MCF 10A (cell line): ENCODE measurements at regions of chr20 and their contacts with region 1.

Region 1: GRCh38 chr20:56392282-56393137 is at the start of gene CSTF1:
- DNase-seq: peak; percentile 99
- H3K4me3 Mint-ChIP-seq: no peak within 1 kb of the TSS
- H3K27ac Mint-ChIP-seq: no peak within 1 kb of the TSS
- H3K4me1 Mint-ChIP-seq: peaks cover 24% of the 10 kb centered on the region
- H3K27me3 Mint-ChIP-seq: no peaks in the 10 kb centered on the region
- CTCF ChIP-seq: no peak
- total RNA-seq, gene CSTF1: 30.1 and 35.1 TPM in 2 replicates

Region 2: DNA sequence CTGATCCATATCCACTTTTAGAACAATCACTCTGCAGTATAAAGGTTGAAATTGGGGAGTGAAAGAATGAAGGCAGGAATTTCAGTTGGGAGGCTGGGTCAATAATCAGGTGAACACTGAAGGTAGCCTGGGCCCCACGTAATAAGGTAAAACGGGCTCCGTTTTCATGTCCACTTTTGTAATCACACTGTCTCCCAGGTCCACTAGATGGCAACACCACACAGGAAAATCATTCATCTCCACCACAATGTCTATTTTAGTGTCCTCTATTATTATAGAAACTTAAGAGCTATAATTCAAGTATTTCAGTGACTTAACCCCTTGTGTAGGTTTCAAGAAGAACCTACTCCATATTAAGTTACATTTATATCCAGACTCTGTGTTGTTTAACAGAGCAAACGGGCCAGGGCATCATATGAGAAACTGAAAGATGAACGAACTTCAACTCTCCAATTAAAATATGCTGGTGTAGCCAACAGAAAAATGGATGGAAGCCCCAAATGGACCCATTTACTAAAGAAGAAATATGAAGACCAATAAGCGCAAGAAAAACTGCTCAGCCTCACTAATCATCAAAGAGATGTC is 189.9 kb before region 1 on chr20:
- CTCF ChIA-PET with region 1: interaction called, 6 read pairs
- POLR2A ChIA-PET with region 1: no interaction called
- intact Hi-C with region 1: loop called (anchors 2 kb)
- DNase-seq: peak; percentile 63
- H3K4me3 Mint-ChIP-seq: no peak overlapping the region
- H3K27ac Mint-ChIP-seq: no peak overlapping the region
- H3K4me1 Mint-ChIP-seq: no peaks in the 10 kb centered on the region
- H3K27me3 Mint-ChIP-seq: no peaks in the 10 kb centered on the region
- CTCF ChIP-seq: peak; percentile 73

Region 3: DNA sequence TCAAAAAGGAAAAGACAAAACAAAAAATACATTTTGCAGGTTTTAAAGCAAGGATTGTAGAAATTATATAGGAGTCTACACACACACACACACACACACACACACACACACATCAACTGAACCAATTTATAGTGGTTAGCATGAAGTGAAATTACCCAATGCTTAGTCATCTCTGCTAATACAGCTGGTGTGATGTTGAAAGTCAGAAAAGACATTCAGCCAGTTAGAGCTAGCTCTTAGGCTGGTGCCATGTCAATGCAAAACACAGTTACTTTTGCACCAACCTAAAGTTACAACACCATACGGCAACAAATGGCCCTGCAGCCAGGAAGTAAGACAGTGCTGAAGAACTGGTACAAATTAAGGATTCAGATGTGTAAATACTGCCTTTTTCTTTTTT is 18.6 kb before region 1 on chr20:
- CTCF ChIA-PET with region 1: interaction called, 30 read pairs
- POLR2A ChIA-PET with region 1: interaction called, 28 read pairs
- intact Hi-C with region 1: no loop called
- DNase-seq: peak; percentile 93
- H3K4me3 Mint-ChIP-seq: peak overlapping the region; percentile 46
- H3K27ac Mint-ChIP-seq: peak overlapping the region; percentile 78
- H3K4me1 Mint-ChIP-seq: peaks cover 14% of the 10 kb centered on the region
- H3K27me3 Mint-ChIP-seq: no peaks in the 10 kb centered on the region
- CTCF ChIP-seq: no peak

Region 4: DNA sequence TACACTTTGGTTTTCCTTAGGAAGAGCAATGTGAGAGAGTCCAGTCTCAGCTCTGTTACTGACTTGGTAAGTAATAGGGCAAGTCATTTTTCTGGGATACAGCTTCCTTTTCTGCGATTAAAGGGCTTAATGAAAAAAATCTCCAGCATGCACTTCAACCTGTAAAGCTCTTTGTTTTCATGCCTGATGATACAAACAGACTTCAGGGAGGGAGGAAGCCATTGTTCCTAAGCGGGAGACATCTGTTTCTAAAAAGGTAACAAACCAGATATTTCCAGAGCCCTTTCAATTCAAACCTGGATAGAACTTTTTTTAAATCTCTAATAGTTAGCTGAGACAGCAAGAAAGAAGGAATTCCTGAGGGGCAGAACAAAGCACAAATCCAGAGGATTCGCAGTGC is 14.4 kb after region 1 on chr20:
- CTCF ChIA-PET with region 1: interaction called, 12 read pairs
- POLR2A ChIA-PET with region 1: interaction called, 10 read pairs
- intact Hi-C with region 1: no loop called
- DNase-seq: no peak
- H3K4me3 Mint-ChIP-seq: no peak overlapping the region
- H3K27ac Mint-ChIP-seq: no peak overlapping the region
- H3K4me1 Mint-ChIP-seq: no peaks in the 10 kb centered on the region
- H3K27me3 Mint-ChIP-seq: no peaks in the 10 kb centered on the region
- CTCF ChIP-seq: no peak

Region 5: GRCh38 chr20:56468316-56469082 is 76.0 kb after region 1 on chr20 and contains the start of gene RTF2:
- CTCF ChIA-PET with region 1: interaction called, 3 read pairs
- POLR2A ChIA-PET with region 1: interaction called, 23 read pairs
- intact Hi-C with region 1: no loop called
- DNase-seq: peak; percentile 91
- H3K4me3 Mint-ChIP-seq: peak within 1 kb of the TSS; percentile 99
- H3K27ac Mint-ChIP-seq: peak within 1 kb of the TSS; percentile 100
- H3K4me1 Mint-ChIP-seq: peaks cover 10% of the 10 kb centered on the region
- H3K27me3 Mint-ChIP-seq: peaks cover 11% of the 10 kb centered on the region
- CTCF ChIP-seq: no peak
- total RNA-seq, gene RTF2: 66.4 and 72.8 TPM in 2 replicates